ENCODE measurements at regions of chr2 and their contacts with region 1.

Region 1: GRCh38 chr2:225660262-225661131 is 261.0 kb downstream of the NYAP2 start:
- DNase-seq: peak; percentile 76
- H3K4me3 Mint-ChIP-seq: no peak overlapping the region
- H3K27ac Mint-ChIP-seq: no peak overlapping the region
- H3K4me1 Mint-ChIP-seq: no peaks in the 10 kb centered on the region
- H3K27me3 Mint-ChIP-seq: peaks cover 18% of the 10 kb centered on the region

Region 2: DNA sequence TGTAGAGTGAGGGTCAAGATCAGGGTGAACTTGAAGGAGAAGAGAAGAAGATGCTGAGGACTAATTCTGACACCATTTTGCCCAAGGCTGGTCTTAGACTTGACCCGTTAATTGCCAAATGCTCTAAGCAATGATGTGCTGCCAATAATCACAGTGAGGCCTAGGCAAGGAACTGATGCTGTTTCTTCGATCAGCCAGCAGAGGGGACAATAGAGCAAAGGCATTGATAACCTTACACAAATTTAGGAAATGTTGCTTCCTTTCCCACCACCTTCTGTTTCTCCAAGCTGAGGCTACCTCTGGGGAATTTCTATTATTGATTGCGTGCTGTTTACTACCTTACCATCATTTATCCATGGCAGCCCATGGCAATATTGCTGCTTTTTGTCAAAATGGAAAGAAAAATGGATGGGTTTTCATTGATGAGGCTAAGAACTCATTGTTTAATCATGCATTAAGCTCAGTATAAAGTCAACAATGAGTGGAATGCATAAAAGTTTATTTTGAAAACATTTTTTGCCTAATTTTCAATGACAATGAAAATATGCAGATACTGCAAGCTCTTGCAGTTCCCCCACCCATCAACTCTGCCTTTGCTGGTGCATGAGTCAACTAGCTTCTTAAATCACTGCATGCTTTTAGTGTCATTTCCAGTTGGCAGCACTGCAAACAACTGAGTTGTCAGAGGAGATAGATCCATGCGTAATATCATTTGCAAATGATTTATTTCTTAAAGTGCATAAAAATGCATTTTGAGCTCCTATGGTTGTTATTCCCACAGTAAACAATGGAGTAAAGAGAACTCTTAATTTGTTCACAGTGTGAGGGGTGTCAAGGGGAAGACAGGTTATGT is 377.4 kb before region 1 on chr2:
- CTCF ChIA-PET with region 1: interaction called, 28 read pairs
- POLR2A ChIA-PET with region 1: interaction called, 3 read pairs
- DNase-seq: peak; percentile 19
- H3K4me3 Mint-ChIP-seq: no peak overlapping the region
- H3K27ac Mint-ChIP-seq: no peak overlapping the region
- H3K4me1 Mint-ChIP-seq: no peaks in the 10 kb centered on the region
- H3K27me3 Mint-ChIP-seq: no peaks in the 10 kb centered on the region

Region 3: GRCh38 chr2:225649274-225649673 is 11.2 kb before region 1 on chr2:
- CTCF ChIA-PET with region 1: interaction called, 13 read pairs
- POLR2A ChIA-PET with region 1: no interaction called
- DNase-seq: no peak
- H3K4me3 Mint-ChIP-seq: no peak overlapping the region
- H3K27ac Mint-ChIP-seq: no peak overlapping the region
- H3K4me1 Mint-ChIP-seq: no peaks in the 10 kb centered on the region
- H3K27me3 Mint-ChIP-seq: peaks cover 2% of the 10 kb centered on the region

Region 4: GRCh38 chr2:225735844-225736243 is 75.3 kb after region 1 on chr2:
- CTCF ChIA-PET with region 1: no interaction called
- POLR2A ChIA-PET with region 1: no interaction called
- DNase-seq: no peak
- H3K4me3 Mint-ChIP-seq: no peak overlapping the region
- H3K27ac Mint-ChIP-seq: no peak overlapping the region
- H3K4me1 Mint-ChIP-seq: no peaks in the 10 kb centered on the region
- H3K27me3 Mint-ChIP-seq: no peaks in the 10 kb centered on the region